ENCODE measurements at regions of chr20 and their contacts with region 1.

Region 1: DNA sequence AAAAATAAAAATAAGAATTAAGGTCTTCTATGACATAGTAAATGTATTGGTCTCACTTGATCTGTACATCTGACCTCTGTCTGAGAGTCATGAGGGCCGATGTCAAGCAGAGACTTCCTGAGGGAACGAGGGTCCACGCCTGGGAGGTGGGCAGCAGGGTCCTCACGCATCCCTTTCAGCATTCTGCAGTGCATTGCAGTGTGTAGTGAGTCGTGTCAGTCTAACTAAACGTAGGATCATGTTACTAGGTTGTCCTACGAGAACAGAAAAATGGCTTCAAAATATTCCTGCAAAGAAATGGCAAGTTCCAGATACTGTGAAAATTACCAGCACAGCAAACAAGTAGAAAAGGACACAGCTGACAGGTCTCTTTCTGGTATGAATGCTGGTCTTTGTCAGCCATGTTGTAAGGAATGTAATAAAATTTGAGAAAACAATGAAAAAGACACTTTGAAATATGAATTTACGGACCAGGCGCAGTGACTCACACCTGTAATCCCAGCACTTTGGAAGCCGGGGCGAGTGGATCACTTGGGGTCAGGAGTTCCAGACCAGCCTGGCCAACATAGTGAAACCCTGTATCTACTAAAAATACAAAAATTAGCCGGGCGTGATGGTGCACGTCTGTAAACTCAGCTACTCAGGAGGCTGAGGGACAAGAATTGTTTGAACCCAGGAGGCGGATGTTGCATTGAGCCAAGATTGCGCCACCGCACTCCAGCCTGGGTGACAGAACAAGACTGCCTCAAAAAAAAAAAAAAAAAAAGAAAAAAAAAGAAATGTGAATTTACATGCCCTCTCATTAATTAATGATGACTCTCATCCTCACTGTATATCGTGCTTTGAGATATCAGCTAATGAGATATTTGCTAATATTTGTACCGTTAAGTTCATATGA is 2.4 kb upstream of the AHCY start:
- DNase-seq: peak in 1 of 2 donors; percentile 24
- H3K4me3 ChIP-seq: no peak overlapping the region
- H3K27ac ChIP-seq: peak overlapping the region in 2 of 3 donors; percentile 11 to 32
- H3K4me1 ChIP-seq: peaks cover 19 to 20% of the 10 kb centered on the region in 2 donors
- H3K27me3 ChIP-seq: no peaks in the 10 kb centered on the region
- CTCF ChIP-seq: no peak
- POLR2A ChIP-seq: no peak

Region 2: DNA sequence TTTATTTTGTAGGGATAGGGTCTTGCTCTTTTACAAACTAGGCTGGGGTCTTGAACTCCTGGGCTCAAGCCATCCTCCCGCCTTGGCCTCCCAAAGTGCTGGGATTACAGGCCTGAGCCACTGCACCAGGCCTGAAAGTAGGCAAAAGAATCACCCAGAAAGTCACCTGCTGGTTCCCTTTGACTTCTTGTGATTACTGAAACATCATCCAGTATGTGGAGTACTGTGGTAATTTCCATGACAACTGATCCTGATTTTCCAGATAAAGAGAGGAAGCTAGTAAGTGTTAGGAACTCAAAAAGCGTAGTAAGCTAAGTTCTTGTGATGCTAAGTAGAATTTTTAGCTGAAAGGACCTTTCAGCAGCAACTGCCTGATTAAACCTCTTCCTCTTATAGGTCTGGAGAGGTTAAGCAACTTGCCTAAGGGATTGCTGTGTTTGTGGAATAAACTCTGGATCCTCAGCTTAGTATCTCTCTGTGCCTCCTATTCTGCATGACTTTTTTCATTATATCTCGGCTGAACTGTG is 295.1 kb before region 1 on chr20:
- intact Hi-C with region 1: no loop called
- DNase-seq: no peak
- H3K4me3 ChIP-seq: no peak overlapping the region
- H3K27ac ChIP-seq: peak overlapping the region in 1 of 3 donors; percentile 51
- H3K4me1 ChIP-seq: peaks cover 35 to 49% of the 10 kb centered on the region in 2 donors
- H3K27me3 ChIP-seq: no peaks in the 10 kb centered on the region
- CTCF ChIP-seq: no peak
- POLR2A ChIP-seq: no peak

Region 3: GRCh38 chr20:34350095-34350494 is 44.5 kb after region 1 on chr20:
- intact Hi-C with region 1: no loop called
- DNase-seq: no peak
- H3K4me3 ChIP-seq: no peak overlapping the region
- H3K27ac ChIP-seq: no peak overlapping the region
- H3K4me1 ChIP-seq: no peaks in the 10 kb centered on the region
- H3K27me3 ChIP-seq: no peaks in the 10 kb centered on the region
- CTCF ChIP-seq: no peak
- POLR2A ChIP-seq: no peak

Region 4: DNA sequence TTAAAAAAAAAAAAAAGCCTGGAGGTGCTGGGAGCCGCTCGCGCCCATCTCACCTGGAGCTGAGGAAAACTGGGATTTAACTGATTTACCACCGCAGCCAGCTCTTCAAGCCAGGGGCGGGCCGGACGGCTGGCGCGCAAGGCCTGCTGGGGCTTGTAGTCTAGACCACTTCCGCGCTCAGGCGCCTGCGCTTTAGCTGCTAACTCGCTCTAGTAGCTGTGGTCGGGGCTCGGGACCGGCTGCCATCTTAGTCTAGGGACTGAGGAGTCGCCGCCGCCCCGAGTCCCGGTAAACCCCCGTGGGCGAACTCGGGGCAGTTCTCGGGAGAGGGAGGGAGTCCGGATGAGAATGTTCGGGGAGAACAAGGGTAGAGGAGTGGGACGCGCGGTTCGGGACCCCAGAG is 57.5 kb after region 1 on chr20 and contains the start of gene ITCH:
- intact Hi-C with region 1: no loop called
- DNase-seq: peak; percentile 97 to 98
- H3K4me3 ChIP-seq: peak within 1 kb of the TSS; percentile 90 to 100 (median 93)
- H3K27ac ChIP-seq: peak within 1 kb of the TSS; percentile 87 to 91 (median 89)
- H3K4me1 ChIP-seq: peaks cover 37 to 49% of the 10 kb centered on the region in 2 donors
- H3K27me3 ChIP-seq: no peaks in the 10 kb centered on the region
- CTCF ChIP-seq: no peak
- POLR2A ChIP-seq: peak; percentile 75 to 97
- total RNA-seq, gene ITCH: 67.5 to 120 (median 75.5) TPM

Region 5: GRCh38 chr20:34768096-34768495 is 462.5 kb after region 1 on chr20:
- intact Hi-C with region 1: loop called (anchors 5 kb)
- DNase-seq: no peak
- H3K4me3 ChIP-seq: no peak overlapping the region
- H3K27ac ChIP-seq: no peak overlapping the region
- H3K4me1 ChIP-seq: peaks cover 13 to 22% of the 10 kb centered on the region in 2 donors
- H3K27me3 ChIP-seq: no peaks in the 10 kb centered on the region
- CTCF ChIP-seq: no peak
- POLR2A ChIP-seq: no peak